ENCODE measurements at regions of chr5 and their contacts with region 1.

Region 1: DNA sequence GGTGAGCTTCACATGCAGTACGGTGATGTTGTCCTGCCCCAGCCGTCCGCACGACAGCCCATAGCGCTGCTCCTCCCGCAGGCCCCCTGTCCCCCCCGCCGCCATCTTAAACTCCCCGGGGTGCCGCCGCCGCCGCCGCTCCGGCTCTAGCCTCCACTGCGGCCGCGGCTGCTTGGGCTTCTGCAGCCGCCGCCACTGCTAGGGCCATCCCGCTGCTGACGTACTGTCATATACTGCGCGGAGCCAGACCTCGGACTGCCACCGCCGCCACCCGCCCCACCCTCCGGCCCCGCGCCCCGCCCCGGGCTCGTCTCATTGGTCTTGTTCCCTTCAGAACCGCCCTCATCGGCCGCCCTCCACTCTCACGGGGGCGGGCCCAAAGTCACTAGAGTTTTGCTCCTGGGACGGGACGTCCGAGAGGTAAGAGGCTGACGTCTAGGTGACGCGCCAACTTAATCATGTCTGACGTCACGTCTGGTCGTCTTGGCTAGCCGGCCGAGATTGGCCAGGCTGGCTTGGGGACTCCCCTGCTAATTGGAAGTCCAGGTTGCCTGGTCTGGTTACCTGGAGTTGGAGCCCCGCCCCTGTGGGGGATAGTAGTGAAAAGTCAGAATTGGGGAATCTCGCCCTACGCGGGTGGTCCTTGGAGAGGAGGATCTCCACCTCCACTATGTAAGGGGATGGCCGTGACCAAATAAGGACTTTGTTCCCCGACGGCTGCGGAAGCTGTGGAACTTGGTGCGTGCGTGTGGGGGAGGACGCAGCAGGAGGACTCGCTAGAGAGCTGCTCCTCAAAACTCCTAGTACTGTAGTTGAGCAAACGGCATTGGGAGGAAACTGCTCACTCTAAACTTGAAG is at the start of gene ELL2:
- DNase-seq: peak; percentile 99
- total RNA-seq, gene ELL2: 30.5 TPM

Region 2: GRCh38 chr5:95883613-95884325 is 78.1 kb before region 1 on chr5:
- intact Hi-C with region 1: no loop called
- DNase-seq: no peak

Region 3: DNA sequence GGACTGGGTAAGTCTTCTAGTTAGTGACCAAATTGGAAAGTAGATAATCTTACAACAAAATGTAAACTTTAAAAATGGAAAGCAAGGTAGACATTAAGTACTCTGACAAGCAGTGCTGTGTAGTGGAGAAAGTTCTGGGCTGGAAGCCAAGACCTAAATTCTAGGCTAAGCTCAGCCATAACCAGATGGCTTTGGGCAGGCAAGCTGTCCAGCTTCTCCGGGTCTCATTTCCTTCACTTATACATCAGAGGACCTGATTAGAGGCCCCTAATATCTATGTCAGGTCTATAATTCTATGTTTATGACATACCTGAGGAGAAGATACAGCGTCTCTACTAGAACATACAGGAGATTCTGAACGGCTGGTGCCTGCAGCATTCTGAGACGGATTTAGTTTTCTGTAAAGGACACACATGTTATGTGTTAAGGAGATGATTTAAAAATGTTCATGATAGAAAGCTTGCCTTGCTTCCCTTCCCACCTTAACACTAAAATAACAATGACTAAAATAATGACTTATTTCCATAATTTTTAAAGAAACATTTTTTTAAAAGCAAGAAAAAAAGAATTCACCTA is 61.4 kb before region 1 on chr5:
- intact Hi-C with region 1: no loop called
- DNase-seq: no peak

Region 4: DNA sequence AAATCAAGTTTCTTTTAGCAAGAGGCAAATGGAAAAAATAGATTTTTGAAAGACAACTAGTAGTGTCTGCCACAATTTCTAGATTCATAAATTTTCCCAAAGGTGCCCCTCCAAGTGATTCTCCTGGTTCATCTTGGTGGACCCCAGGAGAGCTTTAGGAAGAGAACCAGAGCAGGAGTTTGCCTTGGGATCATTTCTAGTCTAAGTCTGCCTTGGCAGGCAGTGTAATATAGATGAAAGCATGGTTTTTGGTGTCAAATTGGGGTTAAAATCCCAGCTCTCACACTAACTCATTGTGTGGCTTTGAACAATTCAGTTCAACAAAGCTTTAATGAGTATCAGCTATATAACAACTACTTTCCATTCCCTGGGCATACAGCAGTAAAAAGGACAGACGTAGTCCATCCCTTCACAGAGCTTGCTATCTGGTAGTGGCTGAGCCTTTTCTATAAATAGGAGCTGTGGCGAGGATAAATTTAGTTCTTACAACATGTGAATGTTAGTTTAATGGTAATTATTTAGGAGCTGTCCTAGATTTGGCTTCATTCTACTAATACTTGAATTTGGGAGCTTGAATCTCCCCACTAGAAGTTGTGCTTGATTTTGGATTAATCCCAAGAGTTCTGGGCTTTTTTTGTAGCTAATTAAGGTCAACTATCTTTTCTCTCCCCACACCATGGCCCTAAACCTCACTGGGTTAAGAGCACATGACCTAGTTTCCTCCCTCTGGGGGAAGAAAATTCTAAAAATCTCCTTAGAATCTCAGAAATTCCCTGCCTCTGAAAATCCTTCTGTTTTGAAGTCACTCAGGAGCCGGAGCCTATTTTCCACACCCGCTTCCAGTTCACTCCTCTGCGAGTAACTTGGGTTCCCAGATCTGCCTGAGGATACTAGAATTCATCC is 273.4 kb after region 1 on chr5:
- intact Hi-C with region 1: loop called (anchors 10 kb)
- DNase-seq: no peak

Measured in cardiac septum (tissue), 1 donor.